Gastrocnemius medialis (tissue), 4 donors: ENCODE measurements at regions of chr2 and their contacts with region 1.

Region 1: DNA sequence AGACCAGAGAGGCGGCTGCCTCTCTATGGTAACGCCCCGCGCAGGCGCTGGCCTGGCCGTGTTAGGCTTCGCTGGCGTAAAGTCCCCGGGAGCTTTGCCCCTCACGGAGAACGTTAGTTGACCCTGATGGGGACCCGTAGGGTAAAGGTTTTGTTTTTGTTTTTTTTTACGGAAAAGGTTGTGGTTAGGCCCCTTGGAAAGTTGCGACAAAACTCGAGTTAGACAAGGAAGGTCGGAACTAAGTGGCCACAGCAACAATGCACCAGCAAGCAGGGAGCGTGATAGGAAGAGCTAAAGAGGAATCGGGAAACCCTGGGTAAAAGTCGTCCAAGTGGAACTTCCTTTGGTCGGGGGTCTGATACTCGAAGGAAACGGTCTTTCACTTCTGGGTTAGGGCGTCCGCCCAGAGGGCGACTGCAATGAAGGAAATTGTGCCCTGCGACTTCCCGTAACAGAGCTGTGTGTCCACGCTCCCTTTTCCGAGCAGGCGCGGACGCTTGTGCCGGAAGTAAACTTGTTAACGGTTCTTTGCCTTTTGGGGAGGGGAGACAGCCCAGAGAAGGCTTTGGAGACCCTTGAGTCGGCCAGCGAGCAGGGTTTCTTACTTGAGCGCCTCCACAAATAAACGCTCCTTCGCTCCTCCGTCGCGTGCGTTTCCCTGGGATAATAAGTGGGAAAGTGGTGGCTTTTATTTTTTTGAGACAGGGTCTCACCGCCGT is 493 bp upstream of the CLASP1 start:
- DNase-seq: peak; percentile 96 to 98
- ATAC-seq: peak; percentile 86 to 87
- H3K4me3 ChIP-seq: peak overlapping the region; percentile 76 to 99 (median 96)
- H3K27ac ChIP-seq: peak overlapping the region; percentile 95 to 100 (median 98)
- H3K4me1 ChIP-seq: peaks cover 47 to 48% of the 10 kb centered on the region in 2 donors
- H3K27me3 ChIP-seq: no peaks in the 10 kb centered on the region
- CTCF ChIP-seq: peak in 1 of 5 experiments; percentile 32
- POLR2A ChIP-seq: peak in 1 of 2 donors; percentile 9

Region 2: DNA sequence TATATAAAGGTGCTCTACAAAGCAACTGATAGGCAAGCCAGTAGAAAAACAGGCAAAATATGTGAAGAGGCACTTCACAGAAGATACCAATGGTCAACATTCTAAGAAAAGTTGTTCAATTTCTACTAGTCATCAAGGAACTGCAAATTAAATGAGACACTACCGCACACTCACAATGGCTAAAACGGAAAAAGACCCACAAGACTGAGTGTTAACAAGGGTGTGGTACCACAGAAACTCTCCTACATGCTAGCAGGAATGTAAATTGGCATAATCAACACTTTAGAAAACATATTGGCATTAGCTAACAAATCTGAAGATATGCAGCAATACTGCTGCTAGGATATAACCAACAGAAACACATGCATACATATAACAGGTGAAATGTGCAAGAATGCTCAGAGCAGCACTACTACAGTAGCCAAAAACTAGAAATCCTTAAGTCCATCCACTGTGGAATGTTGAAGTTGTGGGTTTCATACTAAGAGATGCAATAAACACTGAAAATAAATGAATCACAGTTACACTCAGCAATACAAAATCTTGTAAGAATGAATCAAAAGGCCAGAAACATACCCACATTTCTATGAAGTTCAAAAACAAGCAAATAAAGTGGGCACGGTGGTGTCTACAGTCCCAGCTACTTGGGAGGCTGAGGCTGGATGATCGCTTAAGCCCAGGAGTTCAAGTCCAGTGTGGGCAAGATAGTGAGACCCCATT is 109.8 kb before region 1 on chr2:
- in situ Hi-C with region 1: loop called in 2 of 4 experiments (anchors 5 to 25 kb)
- intact Hi-C with region 1: no loop called
- DNase-seq: no peak
- ATAC-seq: no peak
- H3K4me3 ChIP-seq: peak overlapping the region in 1 of 4 donors; percentile 0
- H3K27ac ChIP-seq: peak overlapping the region; percentile 32 to 49 (median 40)
- H3K4me1 ChIP-seq: peaks cover 66 to 67% of the 10 kb centered on the region in 2 donors
- H3K27me3 ChIP-seq: no peaks in the 10 kb centered on the region
- CTCF ChIP-seq: no peak
- POLR2A ChIP-seq: no peak

Region 3: GRCh38 chr2:121699421-121700333 is 49.9 kb after region 1 on chr2:
- in situ Hi-C with region 1: no loop called
- intact Hi-C with region 1: loop called (anchors 5 kb)
- DNase-seq: peak; percentile 70 to 94
- ATAC-seq: peak; percentile 95 to 98
- H3K4me3 ChIP-seq: no peak overlapping the region
- H3K27ac ChIP-seq: peak overlapping the region; percentile 58 to 68 (median 64)
- H3K4me1 ChIP-seq: peaks cover 6 to 13% of the 10 kb centered on the region in 2 donors
- H3K27me3 ChIP-seq: no peaks in the 10 kb centered on the region
- CTCF ChIP-seq: no peak
- POLR2A ChIP-seq: no peak

Region 4: GRCh38 chr2:121736462-121737341 is 86.9 kb after region 1 on chr2 and contains the start of gene NIFK:
- in situ Hi-C with region 1: loop called in 1 of 4 experiments (anchors 10 kb)
- intact Hi-C with region 1: loop called (anchors 5 kb)
- DNase-seq: peak; percentile 99
- ATAC-seq: peak; percentile 93
- H3K4me3 ChIP-seq: peak within 1 kb of the TSS; percentile 88 to 99 (median 93)
- H3K27ac ChIP-seq: peak within 1 kb of the TSS; percentile 85 to 95 (median 94)
- H3K4me1 ChIP-seq: peaks cover 9 to 17% of the 10 kb centered on the region in 2 donors
- H3K27me3 ChIP-seq: no peaks in the 10 kb centered on the region
- CTCF ChIP-seq: no peak
- POLR2A ChIP-seq: peak; percentile 80 to 89
- total RNA-seq, gene NIFK: 31.1 to 42.3 (median 37.3) TPM

Region 5: DNA sequence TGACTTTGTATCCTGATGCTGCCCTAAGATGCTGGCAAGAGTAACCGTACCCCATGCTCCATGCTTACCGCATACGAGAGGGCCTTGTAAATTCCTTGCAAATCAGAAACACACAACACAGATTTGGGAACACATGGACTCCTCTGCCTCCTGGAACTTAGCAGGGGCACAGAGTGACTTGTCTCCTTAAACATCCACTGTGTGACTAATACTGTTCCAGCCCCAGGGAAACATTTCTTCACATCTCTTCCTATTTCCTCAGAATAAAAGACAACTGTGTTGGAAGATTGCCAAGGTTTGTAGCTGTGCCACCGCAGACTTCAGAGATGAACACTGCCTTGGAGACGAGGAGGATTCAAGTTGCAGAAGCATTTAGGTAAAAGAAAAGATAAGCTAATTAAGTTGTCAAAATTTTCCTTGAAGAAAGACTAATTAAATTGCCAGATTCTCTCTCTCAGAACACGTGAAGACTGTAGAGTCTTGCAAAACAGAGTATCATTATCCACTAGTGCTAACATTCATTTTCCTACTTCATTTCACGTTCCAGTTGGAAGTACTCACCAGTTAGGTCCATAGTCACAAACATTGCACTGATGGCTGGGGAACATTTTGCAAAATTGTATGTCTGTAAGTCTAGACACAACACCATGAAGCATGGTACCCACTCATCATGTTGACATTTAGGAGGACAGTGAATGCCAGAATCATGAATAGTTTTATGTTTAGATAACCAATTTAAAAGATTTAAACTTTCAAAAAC is 294.5 kb after region 1 on chr2:
- in situ Hi-C with region 1: no loop called
- intact Hi-C with region 1: no loop called
- DNase-seq: peak in 1 of 2 donors; percentile 22
- ATAC-seq: peak; percentile 75 to 87
- H3K4me3 ChIP-seq: no peak overlapping the region
- H3K27ac ChIP-seq: peak overlapping the region in 1 of 4 donors; percentile 15
- H3K4me1 ChIP-seq: no peaks in the 10 kb centered on the region
- H3K27me3 ChIP-seq: no peaks in the 10 kb centered on the region
- CTCF ChIP-seq: no peak
- POLR2A ChIP-seq: no peak